SK-N-SH (cell line): ENCODE measurements at regions of chr5 and their contacts with region 1.

Region 1: GRCh38 chr5:154467655-154468354 is 10.2 kb downstream of the HAND1 start:
- DNase-seq: peak; percentile 85
- H3K4me3 ChIP-seq: no peak overlapping the region; a peak in 1 of 4 replicates
- H3K27ac ChIP-seq: peak overlapping the region in 1 of 2 experiments; percentile 53; a peak in 1 of 4 replicates
- H3K4me1 ChIP-seq: peaks cover 0 to 39% of the 10 kb centered on the region in 2 experiments; a peak in 2 of 4 replicates
- H3K27me3 ChIP-seq: no peaks in the 10 kb centered on the region; the same call in 1 of the 2 replicates
- CTCF ChIP-seq: peak; percentile 93
- EP300 ChIP-seq: no peak; a peak in 1 of 4 replicates
- RAD21 ChIP-seq: peak; percentile 94

Region 2: GRCh38 chr5:153987306-153987705 is 480.5 kb before region 1 on chr5:
- CTCF ChIA-PET with region 1: no interaction called
- POLR2A ChIA-PET with region 1: no interaction called
- DNase-seq: no peak
- H3K4me3 ChIP-seq: no peak overlapping the region
- H3K27ac ChIP-seq: no peak overlapping the region
- H3K4me1 ChIP-seq: no peaks in the 10 kb centered on the region
- H3K27me3 ChIP-seq: no peaks in the 10 kb centered on the region
- CTCF ChIP-seq: no peak
- EP300 ChIP-seq: no peak
- RAD21 ChIP-seq: no peak

Region 3: DNA sequence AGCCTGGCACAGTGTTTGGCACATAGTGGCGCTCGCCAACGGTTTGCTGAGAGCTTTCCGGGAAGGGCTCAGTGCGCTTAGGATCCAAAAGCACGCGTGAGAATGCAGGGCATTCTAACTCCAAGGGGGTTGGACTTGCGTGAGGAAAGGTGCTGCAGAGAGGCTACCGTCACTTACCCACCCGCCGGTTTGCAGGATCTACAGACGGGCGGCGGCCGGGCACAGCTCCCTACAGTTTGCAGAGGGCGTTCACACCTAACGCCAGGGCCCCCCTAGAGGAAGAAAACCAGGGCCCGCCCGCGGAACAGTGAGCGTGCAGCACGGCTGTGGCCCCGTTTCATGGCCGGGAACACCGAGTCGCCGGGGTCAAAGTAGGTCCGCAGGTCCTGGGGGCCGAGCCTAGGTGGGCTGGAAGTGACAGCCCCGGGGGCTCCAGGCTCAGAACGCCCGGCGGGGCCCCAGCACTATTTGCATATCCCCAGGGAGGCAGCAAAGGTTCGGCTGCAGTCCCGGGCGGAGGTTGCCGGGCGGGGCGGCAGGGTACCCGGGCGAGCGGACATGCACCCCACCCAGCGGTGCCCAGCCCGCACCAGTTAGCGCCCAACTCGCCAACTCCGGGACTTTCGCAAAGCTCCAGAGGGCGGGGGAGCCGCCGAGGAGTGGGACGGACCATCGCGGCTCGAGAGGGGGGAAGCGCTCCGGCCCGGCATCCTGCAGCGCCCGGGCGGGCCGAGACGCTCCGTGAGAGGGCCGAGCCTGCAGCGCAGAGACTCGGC is 277.8 kb before region 1 on chr5:
- CTCF ChIA-PET with region 1: interaction called, 12 read pairs
- POLR2A ChIA-PET with region 1: no interaction called
- DNase-seq: peak; percentile 97
- H3K4me3 ChIP-seq: peak overlapping the region; percentile 88 to 96
- H3K27ac ChIP-seq: peak overlapping the region; percentile 38 to 55; a peak in 3 of 4 replicates
- H3K4me1 ChIP-seq: peaks cover 17 to 31% of the 10 kb centered on the region in 2 experiments; a peak in 3 of 4 replicates
- H3K27me3 ChIP-seq: no peaks in the 10 kb centered on the region
- CTCF ChIP-seq: peak; percentile 60
- EP300 ChIP-seq: no peak
- RAD21 ChIP-seq: no peak

Region 4: GRCh38 chr5:154449786-154450185 is 18.0 kb before region 1 on chr5:
- CTCF ChIA-PET with region 1: interaction called, 17 read pairs
- POLR2A ChIA-PET with region 1: no interaction called
- DNase-seq: no peak
- H3K4me3 ChIP-seq: no peak overlapping the region
- H3K27ac ChIP-seq: no peak overlapping the region
- H3K4me1 ChIP-seq: peaks cover 0 to 11% of the 10 kb centered on the region in 2 experiments; a peak in 3 of 4 replicates
- H3K27me3 ChIP-seq: no peaks in the 10 kb centered on the region
- CTCF ChIP-seq: no peak
- EP300 ChIP-seq: no peak
- RAD21 ChIP-seq: no peak

Region 5: GRCh38 chr5:154610321-154611154 is 142.7 kb after region 1 on chr5:
- CTCF ChIA-PET with region 1: interaction called, 161 read pairs
- POLR2A ChIA-PET with region 1: interaction called, 5 read pairs
- DNase-seq: peak; percentile 96
- H3K4me3 ChIP-seq: peak overlapping the region; percentile 14 to 47; a peak in 3 of 4 replicates
- H3K27ac ChIP-seq: no peak overlapping the region
- H3K4me1 ChIP-seq: peaks cover 0 to 37% of the 10 kb centered on the region in 2 experiments; a peak in 1 of 4 replicates
- H3K27me3 ChIP-seq: peaks cover 7% of the 10 kb centered on the region
- CTCF ChIP-seq: peak; percentile 86
- EP300 ChIP-seq: peak in 1 of 2 experiments; percentile 11; a peak in 1 of 4 replicates
- RAD21 ChIP-seq: peak; percentile 100

Region 6: DNA sequence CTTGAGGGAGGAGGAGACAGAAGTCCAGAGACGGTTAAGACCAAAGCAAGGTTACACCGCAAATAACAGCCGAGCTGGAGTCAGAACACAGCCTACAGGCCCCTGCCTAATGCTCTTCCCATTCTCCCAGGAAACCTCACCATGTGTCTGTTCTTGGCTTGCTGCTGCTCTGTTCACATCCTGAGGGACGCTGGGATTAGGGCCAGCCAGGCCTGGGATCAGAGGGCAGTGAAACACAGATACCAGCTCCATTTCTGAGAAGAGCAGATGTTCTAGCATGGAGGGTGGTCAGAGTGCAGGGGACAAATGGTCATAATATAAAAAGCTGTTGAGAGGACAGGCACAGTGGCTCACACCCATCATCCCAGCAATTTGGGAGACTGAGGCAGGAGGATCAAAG is 162.6 kb after region 1 on chr5:
- CTCF ChIA-PET with region 1: interaction called, 10 read pairs
- POLR2A ChIA-PET with region 1: interaction called, 3 read pairs
- DNase-seq: no peak
- H3K4me3 ChIP-seq: no peak overlapping the region
- H3K27ac ChIP-seq: no peak overlapping the region
- H3K4me1 ChIP-seq: peaks cover 0 to 5% of the 10 kb centered on the region in 2 experiments; a peak in 1 of 4 replicates
- H3K27me3 ChIP-seq: no peaks in the 10 kb centered on the region; the same call in 1 of the 2 replicates
- CTCF ChIP-seq: no peak
- EP300 ChIP-seq: no peak
- RAD21 ChIP-seq: no peak